ENCODE measurements at regions of chr9 and their contacts with region 1.

Region 1: GRCh38 chr9:134189470-134190231 is 25.3 kb upstream of the RNU6ATAC start:
- DNase-seq: no peak
- H3K4me3 ChIP-seq: no peak overlapping the region
- H3K4me3 Mint-ChIP-seq: peak overlapping the region in 1 of 2 donors; percentile 63
- H3K27ac ChIP-seq: no peak overlapping the region
- H3K27ac Mint-ChIP-seq: no peak overlapping the region
- H3K4me1 ChIP-seq: peaks cover 9 to 32% of the 10 kb centered on the region in 2 donors
- H3K4me1 Mint-ChIP-seq: peaks cover 24% of the 10 kb centered on the region
- H3K27me3 ChIP-seq: peaks cover 0 to 19% of the 10 kb centered on the region in 2 donors
- H3K27me3 Mint-ChIP-seq: peaks cover 19 to 36% (median 24%) of the 10 kb centered on the region in 3 donors
- CTCF ChIP-seq: no peak

Region 2: GRCh38 chr9:134301387-134302129 is 111.9 kb after region 1 on chr9:
- intact Hi-C with region 1: loop called in 1 of 2 experiments (anchors 10 kb)
- DNase-seq: no peak
- H3K4me3 ChIP-seq: no peak overlapping the region
- H3K4me3 Mint-ChIP-seq: no peak overlapping the region
- H3K27ac ChIP-seq: no peak overlapping the region
- H3K27ac Mint-ChIP-seq: no peak overlapping the region
- H3K4me1 ChIP-seq: no peaks in the 10 kb centered on the region
- H3K4me1 Mint-ChIP-seq: peaks cover 7% of the 10 kb centered on the region
- H3K27me3 ChIP-seq: no peaks in the 10 kb centered on the region
- H3K27me3 Mint-ChIP-seq: peaks cover 6 to 18% (median 12%) of the 10 kb centered on the region in 3 donors
- CTCF ChIP-seq: no peak